AG04450 (cell line): ENCODE measurements at regions of chr19 and their contacts with region 1.

Region 1: DNA sequence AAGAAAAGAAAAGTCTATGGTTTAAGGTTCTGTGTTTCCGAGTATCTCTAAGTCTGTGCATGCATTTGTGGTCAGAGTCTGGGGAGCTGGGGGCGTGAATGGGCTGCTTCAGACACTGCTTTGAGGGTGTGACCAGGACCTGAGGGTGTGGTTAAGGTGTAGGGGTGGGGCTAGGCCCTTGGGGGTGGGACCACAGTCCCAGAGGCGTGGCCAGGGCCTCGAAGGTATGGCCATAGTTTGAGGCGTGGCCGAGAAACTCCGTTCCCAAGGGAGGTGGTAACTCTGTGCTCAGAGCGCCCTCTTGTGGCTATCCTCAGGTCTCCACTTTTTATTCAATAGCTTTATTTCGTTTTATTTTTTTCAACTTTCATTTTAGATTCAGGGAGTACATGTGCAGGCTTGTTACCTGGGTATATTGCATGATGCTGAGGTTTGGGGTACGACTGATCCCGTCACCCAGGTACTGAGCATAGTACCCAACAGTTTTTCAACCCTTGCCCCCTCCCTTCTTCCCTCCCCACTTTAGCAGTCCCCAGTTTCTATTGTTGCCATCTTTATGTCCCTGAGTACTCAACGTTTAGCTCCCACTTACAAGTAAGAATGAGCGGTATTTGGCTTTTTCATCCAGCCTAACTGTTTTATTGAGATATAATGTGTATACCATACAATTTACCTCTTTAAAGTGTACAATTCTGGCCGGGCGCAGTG is 7.0 kb upstream of the CBLC start:
- DNase-seq: peak; percentile 84
- H3K4me3 ChIP-seq: no peak overlapping the region
- H3K27ac ChIP-seq: no peak overlapping the region
- H3K27me3 ChIP-seq: no peaks in the 10 kb centered on the region
- CTCF ChIP-seq: peak; percentile 73

Region 2: GRCh38 chr19:44552324-44552723 is 218.4 kb before region 1 on chr19:
- CTCF ChIA-PET with region 1: no interaction called
- POLR2A ChIA-PET with region 1: no interaction called
- DNase-seq: no peak
- H3K4me3 ChIP-seq: no peak overlapping the region
- H3K27ac ChIP-seq: no peak overlapping the region
- H3K27me3 ChIP-seq: no peaks in the 10 kb centered on the region
- CTCF ChIP-seq: peak; percentile 44

Region 3: GRCh38 chr19:44689056-44689895 is 81.4 kb before region 1 on chr19:
- CTCF ChIA-PET with region 1: interaction called, 61 read pairs
- POLR2A ChIA-PET with region 1: no interaction called
- DNase-seq: peak; percentile 34
- H3K4me3 ChIP-seq: no peak overlapping the region
- H3K27ac ChIP-seq: no peak overlapping the region
- H3K27me3 ChIP-seq: no peaks in the 10 kb centered on the region
- CTCF ChIP-seq: peak; percentile 93

Region 4: GRCh38 chr19:44732615-44733014 is 38.1 kb before region 1 on chr19:
- CTCF ChIA-PET with region 1: interaction called, 19 read pairs
- POLR2A ChIA-PET with region 1: interaction called, 6 read pairs
- DNase-seq: no peak
- H3K4me3 ChIP-seq: no peak overlapping the region
- H3K27ac ChIP-seq: no peak overlapping the region
- H3K27me3 ChIP-seq: no peaks in the 10 kb centered on the region
- CTCF ChIP-seq: no peak

Region 5: DNA sequence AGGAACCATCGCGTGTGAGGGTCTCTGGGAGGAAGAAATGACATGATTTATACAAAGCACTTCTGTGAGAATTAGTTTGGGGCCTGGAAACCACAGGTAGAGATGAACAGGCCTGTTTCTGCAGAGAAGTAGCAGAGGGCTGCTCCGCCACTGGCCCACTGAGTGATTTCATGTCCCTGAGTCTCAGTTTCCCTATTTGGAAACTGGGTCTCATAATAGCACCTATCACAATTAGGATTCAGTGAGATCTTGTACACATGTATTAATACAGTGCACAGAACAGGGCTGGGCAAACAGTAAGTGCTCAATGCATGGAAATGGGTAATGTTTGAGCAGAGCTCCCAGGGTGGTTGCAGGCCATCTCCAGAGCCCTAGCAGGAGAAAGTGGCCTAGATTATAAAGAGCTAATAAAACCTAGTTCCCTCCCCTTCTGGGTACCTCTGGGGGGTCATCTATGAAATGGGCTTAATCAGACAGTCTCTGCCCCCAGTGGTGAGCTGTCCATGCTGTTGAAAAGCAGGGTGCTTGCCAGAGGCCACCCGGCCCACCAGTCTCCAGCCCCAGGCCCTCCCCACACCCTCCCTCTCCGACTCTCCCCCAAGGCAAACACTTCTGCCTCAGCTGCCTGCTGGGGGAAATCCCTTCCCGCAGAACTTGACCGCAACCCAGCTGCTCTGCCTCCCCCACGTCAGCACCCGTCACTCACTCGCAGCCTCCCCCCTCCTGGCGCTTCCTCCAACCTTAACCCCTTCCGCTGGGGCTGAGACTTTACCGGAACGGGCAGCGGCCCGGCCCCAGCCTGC is 17.7 kb before region 1 on chr19:
- CTCF ChIA-PET with region 1: interaction called, 23 read pairs
- POLR2A ChIA-PET with region 1: interaction called, 3 read pairs
- DNase-seq: peak; percentile 96
- H3K4me3 ChIP-seq: peak overlapping the region; percentile 59
- H3K27ac ChIP-seq: peak overlapping the region; percentile 84
- H3K27me3 ChIP-seq: no peaks in the 10 kb centered on the region
- CTCF ChIP-seq: no peak; the same call in 1 of the 2 replicates

Region 6: DNA sequence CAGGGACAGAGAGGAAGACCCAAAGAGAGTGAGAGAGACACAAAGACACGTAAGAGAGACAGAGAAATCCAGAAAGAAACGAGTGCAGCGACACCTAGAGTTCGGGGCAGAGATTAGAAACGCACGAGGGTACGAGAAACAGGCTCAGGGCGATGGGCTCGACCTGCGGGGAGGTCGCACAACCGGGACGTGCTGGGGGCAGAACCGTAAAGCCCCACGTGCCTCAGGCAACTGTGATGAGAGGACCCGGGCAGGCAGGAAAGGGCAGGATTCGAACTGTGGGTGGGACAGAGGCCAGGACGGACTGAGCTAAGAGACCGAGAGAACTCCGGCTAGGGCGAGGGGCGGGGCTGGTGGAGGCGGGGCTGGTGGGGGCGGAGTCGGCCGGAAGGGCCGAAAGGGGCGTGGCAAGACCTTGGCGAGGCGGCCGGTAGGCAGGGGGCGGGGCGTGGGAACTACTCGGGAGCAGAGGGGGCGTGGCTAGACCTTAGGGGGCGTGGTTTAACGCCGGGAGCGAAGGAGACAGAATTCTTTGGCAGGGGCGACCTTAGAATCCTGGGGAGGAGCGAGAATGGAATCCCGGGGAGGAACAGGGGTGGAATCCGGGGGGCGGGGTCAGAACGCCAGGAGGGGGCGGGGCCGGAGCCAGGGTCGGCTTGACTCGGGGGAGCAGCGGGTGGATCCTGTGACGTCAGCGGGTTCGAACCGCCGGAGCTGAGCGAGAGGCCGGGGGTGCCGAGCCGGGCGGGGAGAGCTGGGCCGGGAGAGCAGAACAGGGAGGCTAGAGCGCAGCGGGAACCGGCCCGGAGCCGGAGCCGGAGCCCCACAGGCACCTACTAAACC is 75.1 kb after region 1 on chr19 and contains the start of gene NECTIN2:
- CTCF ChIA-PET with region 1: interaction called, 14 read pairs
- POLR2A ChIA-PET with region 1: no interaction called
- DNase-seq: peak; percentile 98
- H3K4me3 ChIP-seq: peak within 1 kb of the TSS; percentile 94
- H3K27ac ChIP-seq: peak within 1 kb of the TSS; percentile 86
- H3K27me3 ChIP-seq: no peaks in the 10 kb centered on the region
- CTCF ChIP-seq: peak; percentile 83
- polyA plus RNA-seq, gene NECTIN2: 80.2 and 110 TPM in 2 replicates